Head of caudate nucleus (tissue), 42 donors: ENCODE measurements at regions of chr6 and their contacts with region 1.

Region 1: GRCh38 chr6:3389390-3390167 is 67.3 kb downstream of the SLC22A23 start:
- DNase-seq: peak in 26 of 42 donors; percentile 32 to 85 (median 60)

Region 2: GRCh38 chr6:3456755-3457466 is 67.3 kb after region 1 on chr6 and contains the start of gene SLC22A23:
- intact Hi-C with region 1: loop called (anchors 5 kb)
- DNase-seq: peak in 40 of 42 donors; percentile 49 to 90 (median 82)